ENCODE measurements at regions of chr16 and their contacts with region 1.

Region 1: GRCh38 chr16:3599121-3599520 is 12.3 kb downstream of the SLX4 start:
- DNase-seq: no peak
- H3K4me3 ChIP-seq: no peak overlapping the region
- H3K27ac ChIP-seq: no peak overlapping the region
- H3K4me1 ChIP-seq: no peaks in the 10 kb centered on the region
- H3K27me3 ChIP-seq: no peaks in the 10 kb centered on the region
- CTCF ChIP-seq: no peak

Region 2: GRCh38 chr16:3618769-3619141 is 19.6 kb after region 1 on chr16:
- CTCF ChIA-PET with region 1: no interaction called
- POLR2A ChIA-PET with region 1: interaction called, 11 read pairs
- intact Hi-C with region 1: no loop called
- DNase-seq: no peak
- H3K4me3 ChIP-seq: no peak overlapping the region
- H3K27ac ChIP-seq: no peak overlapping the region
- H3K4me1 ChIP-seq: no peaks in the 10 kb centered on the region
- H3K27me3 ChIP-seq: no peaks in the 10 kb centered on the region
- CTCF ChIP-seq: no peak